Ascending aorta (tissue), 2 donors: ENCODE measurements at regions of chr9 and their contacts with region 1.

Region 1: GRCh38 chr9:38392235-38393127 is at the start of gene ALDH1B1:
- DNase-seq: peak; percentile 58 to 94
- H3K4me3 ChIP-seq: peak within 1 kb of the TSS; percentile 84 to 87
- H3K27ac ChIP-seq: peak within 1 kb of the TSS; percentile 98 to 99
- H3K4me1 ChIP-seq: peaks cover 31 to 47% of the 10 kb centered on the region in 2 donors
- H3K27me3 ChIP-seq: no peaks in the 10 kb centered on the region
- CTCF ChIP-seq: peak in 1 of 3 experiments; percentile 13
- total RNA-seq, gene ALDH1B1: 85.5 TPM

Region 2: GRCh38 chr9:37485389-37486219 is 906.9 kb before region 1 on chr9 and contains the start of gene POLR1E:
- intact Hi-C with region 1: loop called (anchors 5 kb)
- DNase-seq: peak; percentile 84 to 97
- H3K4me3 ChIP-seq: peak within 1 kb of the TSS; percentile 53 to 88
- H3K27ac ChIP-seq: peak within 1 kb of the TSS; percentile 88 to 94
- H3K4me1 ChIP-seq: peaks cover 12 to 19% of the 10 kb centered on the region in 2 donors
- H3K27me3 ChIP-seq: no peaks in the 10 kb centered on the region
- CTCF ChIP-seq: no peak
- total RNA-seq, gene POLR1E: 18.0 TPM

Region 3: DNA sequence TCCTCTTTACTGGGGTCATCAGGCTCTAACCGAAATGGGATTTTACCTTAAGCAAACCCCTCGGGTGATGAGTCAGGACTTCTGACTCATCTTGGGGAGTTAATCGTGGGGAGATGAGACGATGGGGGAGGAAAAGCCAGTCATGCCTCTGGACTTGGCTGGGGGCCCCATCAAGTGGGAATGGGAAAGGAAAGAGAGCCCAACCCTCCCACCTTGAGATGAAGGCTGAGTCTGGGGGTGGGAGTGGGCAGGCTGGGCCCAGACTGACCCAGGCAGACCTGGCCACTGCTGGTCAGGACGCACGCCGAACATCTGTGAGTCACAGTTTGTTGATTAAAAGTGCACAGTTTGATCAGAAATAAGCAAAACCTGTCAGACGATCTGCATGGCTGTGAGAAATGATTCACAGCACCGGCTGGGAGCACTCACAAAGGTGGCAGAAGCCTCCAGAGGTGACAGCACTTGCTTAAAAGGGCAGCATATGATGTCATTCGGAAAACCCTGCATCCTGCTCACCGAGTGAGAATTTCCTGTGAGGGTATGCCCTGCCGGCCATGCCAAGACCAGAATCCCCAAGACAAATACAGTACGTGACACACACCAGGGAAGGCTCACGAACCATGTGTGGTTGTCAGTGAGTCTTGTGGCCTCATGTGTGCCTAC is 438.6 kb before region 1 on chr9:
- intact Hi-C with region 1: loop called (anchors 1 kb)
- DNase-seq: peak; percentile 66 to 84
- H3K4me3 ChIP-seq: no peak overlapping the region
- H3K27ac ChIP-seq: peak overlapping the region; percentile 65 to 68
- H3K4me1 ChIP-seq: peaks cover 7 to 14% of the 10 kb centered on the region in 2 donors
- H3K27me3 ChIP-seq: no peaks in the 10 kb centered on the region
- CTCF ChIP-seq: no peak

Region 4: GRCh38 chr9:38371495-38371894 is 21.0 kb before region 1 on chr9:
- intact Hi-C with region 1: loop called (anchors 2 kb)
- DNase-seq: peak in 1 of 2 donors; percentile 63
- H3K4me3 ChIP-seq: no peak overlapping the region
- H3K27ac ChIP-seq: no peak overlapping the region
- H3K4me1 ChIP-seq: peaks cover 0 to 4% of the 10 kb centered on the region in 2 donors
- H3K27me3 ChIP-seq: no peaks in the 10 kb centered on the region
- CTCF ChIP-seq: peak in 2 of 3 experiments; percentile 17 to 49